Aorta (tissue), 5 donors: ENCODE measurements at regions of chr19 and their contacts with region 1.

Region 1: GRCh38 chr19:3665681-3666544 is 34.4 kb downstream of the PIP5K1C start:
- DNase-seq: peak; percentile 74 to 93
- ATAC-seq: peak; percentile 71
- H3K4me3 ChIP-seq: no peak overlapping the region
- H3K27ac ChIP-seq: no peak overlapping the region
- H3K4me1 ChIP-seq: no peaks in the 10 kb centered on the region
- H3K27me3 ChIP-seq: no peaks in the 10 kb centered on the region

Region 2: DNA sequence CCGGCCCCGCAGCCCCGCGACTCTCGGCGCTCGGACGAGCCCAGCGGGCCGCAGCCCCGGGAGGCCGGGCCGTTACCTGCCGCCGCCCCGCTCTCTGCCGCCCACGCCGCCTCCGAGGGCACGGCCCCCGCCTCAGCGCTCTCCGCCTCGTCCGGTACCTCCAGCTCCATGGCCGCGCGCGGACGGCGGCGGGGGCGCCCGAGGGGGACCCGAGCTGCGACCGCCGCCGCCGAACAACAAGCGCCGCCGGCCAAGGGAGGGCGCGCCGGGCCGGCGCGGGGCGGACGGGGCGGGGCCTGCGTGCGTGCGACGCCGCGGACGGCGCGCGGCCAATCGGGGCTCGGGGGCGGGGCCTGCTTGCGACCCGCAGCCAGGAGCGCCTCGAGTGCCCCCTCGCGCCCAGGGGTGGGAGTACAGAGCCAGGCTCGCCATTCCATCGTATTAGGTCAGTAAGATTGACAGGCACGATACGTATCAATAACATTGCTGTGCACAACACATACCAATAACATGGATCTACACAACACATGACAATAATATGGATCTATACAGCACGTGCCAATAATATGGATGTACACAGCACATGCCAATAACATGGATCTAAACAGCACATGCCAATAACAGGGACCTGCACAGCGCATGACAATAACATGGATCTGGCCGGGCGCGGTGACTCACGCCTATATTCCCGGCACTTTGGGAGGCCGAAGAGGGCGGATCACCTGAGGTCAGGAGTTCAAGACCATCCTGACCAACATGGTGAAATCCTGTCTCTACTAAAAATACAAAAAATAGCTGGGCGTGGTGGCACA is 34.5 kb after region 1 on chr19 and contains the start of gene PIP5K1C:
- intact Hi-C with region 1: loop called (anchors 1 to 2 kb)
- DNase-seq: peak; percentile 93 to 97
- ATAC-seq: peak; percentile 95
- H3K4me3 ChIP-seq: peak within 1 kb of the TSS; percentile 91 to 94
- H3K27ac ChIP-seq: peak within 1 kb of the TSS in 1 of 2 donors; percentile 60
- H3K4me1 ChIP-seq: no peaks in the 10 kb centered on the region
- H3K27me3 ChIP-seq: no peaks in the 10 kb centered on the region
- total RNA-seq, gene PIP5K1C: 78.7 to 83.3 TPM

Region 3: GRCh38 chr19:3899531-3900292 is 233.8 kb after region 1 on chr19:
- intact Hi-C with region 1: no loop called
- DNase-seq: peak in 1 of 2 donors; percentile 72
- ATAC-seq: peak; percentile 59
- H3K4me3 ChIP-seq: no peak overlapping the region
- H3K27ac ChIP-seq: no peak overlapping the region
- H3K4me1 ChIP-seq: no peaks in the 10 kb centered on the region
- H3K27me3 ChIP-seq: no peaks in the 10 kb centered on the region